Right ventricle myocardium inferior (tissue), 1 donor: ENCODE measurements at regions of chr4 and their contacts with region 1.

Region 1: DNA sequence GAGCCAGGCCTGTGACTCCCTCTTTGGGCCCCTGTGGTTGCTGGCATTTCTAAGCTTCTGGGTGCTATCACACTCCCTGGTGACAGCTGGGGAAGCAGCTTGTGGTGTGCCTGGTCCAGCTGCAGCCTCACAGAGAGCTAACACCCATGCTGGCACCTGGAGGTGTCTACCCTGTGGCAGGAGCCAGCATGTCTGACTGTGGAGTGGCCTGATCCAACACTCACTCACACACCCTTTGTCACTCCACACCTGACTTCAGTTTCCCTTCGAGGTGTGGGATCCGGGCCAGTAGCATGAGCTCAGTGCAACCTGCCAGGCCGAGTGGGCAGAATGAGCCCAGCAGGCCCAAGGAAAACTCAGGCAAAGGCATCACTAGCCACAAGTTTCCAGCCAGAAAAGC is 67.5 kb downstream of the TECRL start:
- DNase-seq: peak; percentile 82
- ATAC-seq: peak; percentile 96

Region 2: DNA sequence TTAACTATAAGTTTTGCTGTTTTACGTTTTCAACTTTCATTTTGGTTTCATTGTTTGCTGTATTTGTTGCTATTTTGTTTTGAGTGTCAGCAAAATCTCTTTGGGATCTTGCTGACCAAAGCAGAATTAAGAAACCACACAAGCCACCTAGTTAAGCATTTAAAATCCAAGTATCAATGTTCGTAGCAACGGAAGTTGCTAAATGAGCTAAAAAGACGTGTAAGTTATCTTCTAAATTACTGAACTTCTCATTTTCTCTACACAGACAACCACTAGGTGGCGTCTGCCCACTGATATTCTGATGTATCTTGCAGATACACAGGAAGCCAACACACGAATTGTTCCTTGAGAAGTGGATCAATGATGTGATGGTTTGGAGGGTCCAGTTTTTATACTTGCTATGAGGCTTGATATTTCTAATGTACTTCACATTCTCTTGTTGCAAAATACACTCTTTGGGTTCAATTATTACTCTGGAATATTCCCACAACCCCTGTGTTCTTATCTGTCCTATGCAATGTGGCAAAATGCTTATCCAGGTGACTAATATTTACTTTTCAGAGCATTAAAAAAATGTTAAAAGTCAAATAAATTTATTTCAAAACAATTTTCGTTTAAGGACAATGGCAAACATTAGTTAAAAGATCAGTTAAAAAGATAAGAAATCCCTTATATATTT is 182.9 kb before region 1 on chr4:
- intact Hi-C with region 1: no loop called
- DNase-seq: no peak
- ATAC-seq: no peak

Region 3: GRCh38 chr4:64353904-64354303 is 12.2 kb after region 1 on chr4:
- intact Hi-C with region 1: loop called (anchors 1 kb)
- DNase-seq: no peak
- ATAC-seq: peak; percentile 50

Region 4: DNA sequence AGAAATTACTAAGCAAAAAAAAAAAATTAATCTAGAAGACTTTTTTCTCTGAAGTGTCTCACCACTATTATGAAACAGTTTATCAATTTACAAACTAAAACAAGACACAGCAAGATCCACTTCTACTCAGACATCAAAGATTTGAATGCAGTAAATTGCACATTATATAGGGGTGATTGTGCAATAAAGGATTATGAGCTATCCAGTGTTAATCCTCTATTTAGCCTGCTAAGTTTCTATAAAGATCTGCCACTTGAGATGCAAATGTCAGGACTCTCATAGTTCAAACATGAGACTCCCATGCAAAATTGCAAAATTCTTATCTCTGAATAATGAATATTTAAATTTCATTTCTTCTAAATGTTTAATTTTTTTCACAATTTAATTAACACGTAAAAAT is 65.3 kb after region 1 on chr4:
- intact Hi-C with region 1: loop called (anchors 5 kb)
- DNase-seq: no peak
- ATAC-seq: no peak

Region 5: GRCh38 chr4:64503945-64504697 is 162.4 kb after region 1 on chr4:
- intact Hi-C with region 1: loop called (anchors 10 kb)
- DNase-seq: no peak
- ATAC-seq: no peak

Region 6: GRCh38 chr4:64539234-64539849 is 197.6 kb after region 1 on chr4:
- intact Hi-C with region 1: loop called (anchors 10 kb)
- DNase-seq: no peak
- ATAC-seq: peak; percentile 76